AG04449 (cell line): ENCODE measurements at regions of chr13 and their contacts with region 1.

Region 1: DNA sequence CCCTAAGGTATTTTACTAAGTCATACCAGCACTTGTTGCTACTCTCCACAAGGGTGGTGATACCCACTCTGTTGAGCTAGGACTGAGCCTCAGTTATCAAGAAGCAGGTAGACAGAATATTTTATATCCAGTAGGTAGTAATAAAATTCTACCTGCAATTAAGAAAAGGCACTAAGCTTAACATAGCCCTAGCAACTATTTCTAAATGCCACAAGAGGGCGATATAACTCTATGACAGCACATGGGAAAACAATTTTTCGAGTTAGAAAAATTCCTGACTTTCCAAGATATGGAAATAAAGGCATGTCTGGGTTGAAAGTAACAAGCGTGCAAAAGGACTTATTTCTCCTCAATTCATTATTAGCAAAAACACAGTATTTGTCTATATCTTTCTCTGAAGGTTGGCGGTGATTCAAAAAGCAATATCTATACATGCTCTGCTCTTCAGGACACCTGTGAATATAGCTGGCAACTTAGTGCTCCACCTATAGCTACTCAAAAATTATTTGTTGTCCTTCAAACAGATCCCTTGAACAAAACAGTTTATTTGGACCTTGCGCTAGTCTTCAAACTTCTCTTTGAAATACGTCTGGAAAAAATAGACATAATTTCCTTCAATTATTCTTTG is 14.7 kb downstream of the CCDC169 start:
- DNase-seq: no peak
- H3K4me3 ChIP-seq: no peak overlapping the region
- CTCF ChIP-seq: peak; percentile 55

Region 2: DNA sequence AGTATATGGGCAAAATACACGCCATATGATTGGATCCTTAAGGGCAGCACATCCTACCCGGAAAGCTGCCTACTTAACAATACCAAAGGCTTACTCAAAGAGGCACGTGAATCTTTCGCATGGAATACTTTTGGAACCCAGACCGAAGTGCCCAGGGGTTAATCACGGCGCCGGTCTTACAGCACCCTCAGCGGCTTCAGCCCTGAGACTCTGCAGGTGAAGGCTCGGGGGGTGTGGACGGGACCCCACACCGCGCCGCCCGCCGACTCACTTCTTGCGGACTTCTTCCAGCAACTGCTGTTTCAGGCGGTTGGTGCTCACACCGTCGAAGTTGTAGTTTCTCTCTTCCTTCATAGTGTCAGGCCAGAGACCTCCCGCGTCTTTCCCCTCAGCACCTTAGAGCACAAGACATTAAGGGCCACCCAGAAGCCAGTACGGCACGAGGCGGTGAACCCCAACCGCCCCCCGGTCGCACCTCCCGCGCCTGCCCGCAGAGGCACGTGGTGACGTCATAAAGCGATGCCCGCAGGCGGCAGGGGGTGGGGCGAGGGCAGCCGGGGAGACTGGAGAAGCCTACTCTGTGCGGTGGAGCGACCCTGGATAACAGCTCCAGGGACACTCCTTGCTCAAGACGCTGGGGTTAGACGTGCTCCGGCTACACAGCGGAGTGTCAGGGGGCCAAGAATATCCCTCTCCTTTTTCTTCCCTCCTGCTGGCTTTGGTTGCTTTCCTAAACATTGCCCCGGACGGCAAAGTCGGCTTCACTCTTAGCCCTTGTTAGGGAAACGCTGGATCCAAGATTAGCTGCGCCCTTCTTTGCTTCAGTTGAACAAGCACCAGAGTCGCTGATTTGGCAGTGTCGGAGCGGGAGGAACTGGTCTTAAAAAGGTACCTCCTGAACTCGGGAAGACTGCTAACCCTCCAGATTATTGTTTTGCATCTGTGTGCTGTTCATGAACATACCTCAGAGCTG is 14.7 kb after region 1 on chr13 and contains the start of gene CCDC169:
- CTCF ChIA-PET with region 1: interaction called, 66 read pairs
- POLR2A ChIA-PET with region 1: no interaction called
- DNase-seq: no peak
- H3K4me3 ChIP-seq: peak within 1 kb of the TSS; percentile 72
- CTCF ChIP-seq: no peak

Region 3: GRCh38 chr13:36306072-36306471 is 23.1 kb after region 1 on chr13:
- CTCF ChIA-PET with region 1: interaction called, 12 read pairs
- POLR2A ChIA-PET with region 1: no interaction called
- DNase-seq: no peak
- H3K4me3 ChIP-seq: no peak overlapping the region
- CTCF ChIP-seq: no peak

Region 4: GRCh38 chr13:36395280-36395679 is 112.3 kb after region 1 on chr13:
- CTCF ChIA-PET with region 1: interaction called, 88 read pairs
- POLR2A ChIA-PET with region 1: no interaction called
- DNase-seq: peak; percentile 55
- H3K4me3 ChIP-seq: no peak overlapping the region
- CTCF ChIP-seq: peak; percentile 27

Region 5: GRCh38 chr13:36420437-36420891 is 137.5 kb after region 1 on chr13:
- CTCF ChIA-PET with region 1: interaction called, 39 read pairs
- POLR2A ChIA-PET with region 1: no interaction called
- DNase-seq: no peak
- H3K4me3 ChIP-seq: no peak overlapping the region
- CTCF ChIP-seq: peak; percentile 76